Sciatic nerve (tissue), 2 donors: ENCODE measurements at regions of chr6 and their contacts with region 1.

Region 1: GRCh38 chr6:98179606-98180005 is 654.8 kb upstream of the POU3F2 start:
- DNase-seq: no peak
- ATAC-seq: no peak

Region 2: DNA sequence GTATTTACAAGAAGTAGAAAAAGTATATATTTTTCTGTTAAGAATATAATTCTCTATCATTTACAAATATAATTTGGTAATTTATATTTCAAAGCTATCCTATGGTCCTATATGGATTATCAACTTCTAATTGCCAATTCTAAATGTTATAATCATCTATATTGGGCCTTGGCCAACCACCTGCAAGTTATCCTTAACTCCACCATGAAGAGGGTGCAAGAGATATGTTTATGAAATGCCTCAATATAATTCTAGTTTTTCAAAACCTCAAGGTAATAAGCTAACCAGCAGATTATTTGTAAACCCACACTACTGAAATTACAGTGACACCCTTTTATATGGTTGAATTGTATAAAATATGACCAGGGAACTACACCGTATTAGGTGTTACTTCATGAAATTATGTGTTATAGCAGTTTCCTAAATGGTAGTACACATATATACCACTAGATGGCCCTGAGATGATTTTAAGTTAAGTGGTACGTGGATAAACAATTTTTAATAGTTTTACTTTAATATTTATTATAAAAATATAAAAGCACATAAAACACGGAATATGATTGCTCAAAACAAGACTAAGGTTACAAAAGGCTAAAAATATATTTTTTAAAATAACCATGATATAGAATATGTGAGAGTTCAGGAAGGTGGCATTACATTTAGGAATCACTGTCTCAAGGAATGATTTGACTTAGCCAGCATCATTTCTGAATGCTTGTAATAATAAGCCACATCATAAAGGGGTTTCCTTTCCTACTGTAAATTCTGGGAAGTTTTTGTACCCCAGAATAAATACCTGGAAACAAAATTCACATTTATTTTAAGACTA is 1255.3 kb after region 1 on chr6:
- intact Hi-C with region 1: loop called (anchors 5 kb)
- DNase-seq: no peak
- ATAC-seq: no peak